PC-3 (cell line): ENCODE measurements at regions of chr12 and their contacts with region 1.

Region 1: GRCh38 chr12:43407816-43408645 is 144.0 kb downstream of the ADAMTS20 start:
- DNase-seq: peak; percentile 70
- ATAC-seq: peak; percentile 81
- H3K4me3 ChIP-seq: no peak overlapping the region
- H3K27ac ChIP-seq: peak overlapping the region; percentile 82
- H3K4me1 ChIP-seq: peaks cover 34% of the 10 kb centered on the region
- H3K27me3 ChIP-seq: no peaks in the 10 kb centered on the region
- CTCF ChIP-seq: no peak

Region 2: GRCh38 chr12:43370260-43370659 is 37.8 kb before region 1 on chr12:
- CTCF ChIA-PET with region 1: no interaction called
- POLR2A ChIA-PET with region 1: no interaction called
- intact Hi-C with region 1: loop called (anchors 1 kb)
- DNase-seq: peak; percentile 94
- ATAC-seq: peak; percentile 99
- H3K4me3 ChIP-seq: no peak overlapping the region
- H3K27ac ChIP-seq: peak overlapping the region; percentile 54
- H3K4me1 ChIP-seq: peaks cover 16% of the 10 kb centered on the region
- H3K27me3 ChIP-seq: no peaks in the 10 kb centered on the region
- CTCF ChIP-seq: no peak

Region 3: DNA sequence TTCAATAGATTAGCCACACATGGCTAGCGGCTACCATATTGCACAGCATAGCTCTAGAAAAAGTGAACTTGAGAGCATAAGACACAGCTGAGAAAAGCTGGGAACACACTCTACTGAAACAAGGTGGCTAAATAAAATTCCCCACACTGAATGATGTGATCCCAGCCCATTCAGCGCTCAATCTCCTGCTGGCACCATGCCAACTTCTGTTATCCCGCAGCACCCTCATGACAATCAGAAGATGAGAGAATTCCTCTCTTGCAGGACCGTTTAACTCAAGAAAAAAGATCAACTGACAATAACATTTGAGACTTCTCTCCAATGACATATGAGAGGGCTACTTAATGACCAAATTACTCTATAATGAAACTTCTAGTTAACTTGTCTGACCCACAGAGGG is 28.6 kb after region 1 on chr12:
- CTCF ChIA-PET with region 1: no interaction called
- POLR2A ChIA-PET with region 1: no interaction called
- intact Hi-C with region 1: no loop called
- DNase-seq: no peak
- ATAC-seq: no peak
- H3K4me3 ChIP-seq: no peak overlapping the region
- H3K27ac ChIP-seq: no peak overlapping the region
- H3K4me1 ChIP-seq: no peaks in the 10 kb centered on the region
- H3K27me3 ChIP-seq: no peaks in the 10 kb centered on the region
- CTCF ChIP-seq: no peak

Region 4: DNA sequence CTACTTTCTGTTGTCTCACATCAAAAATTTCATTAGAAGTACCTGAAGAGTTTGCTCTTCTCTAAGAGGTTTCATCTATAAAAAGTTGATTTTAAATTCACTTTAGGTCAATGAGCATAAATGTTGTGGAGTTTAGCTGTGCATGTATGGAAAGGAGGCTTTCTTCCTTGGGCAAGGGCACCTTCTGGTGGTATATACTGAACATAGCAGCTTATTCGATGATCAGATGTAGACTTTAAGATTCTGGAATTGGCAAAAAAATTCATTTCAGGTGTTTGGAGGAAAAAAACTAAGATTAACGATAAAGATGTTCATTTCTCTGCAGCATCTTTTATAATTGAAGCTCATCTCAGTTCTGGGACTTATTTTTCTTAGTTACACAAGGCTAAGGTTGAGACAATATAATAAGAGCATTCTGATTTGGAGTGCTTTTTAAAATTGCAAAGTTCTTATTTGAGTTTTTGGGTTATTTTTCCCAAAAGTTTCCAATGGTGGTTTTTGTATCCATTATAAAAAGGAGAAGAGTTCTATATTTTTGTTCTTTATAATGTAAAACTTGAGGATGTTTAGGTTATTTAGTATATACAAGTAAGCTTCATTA is 474.6 kb after region 1 on chr12:
- CTCF ChIA-PET with region 1: no interaction called
- POLR2A ChIA-PET with region 1: no interaction called
- intact Hi-C with region 1: no loop called
- DNase-seq: peak; percentile 75
- ATAC-seq: peak; percentile 82
- H3K4me3 ChIP-seq: no peak overlapping the region
- H3K27ac ChIP-seq: no peak overlapping the region
- H3K4me1 ChIP-seq: no peaks in the 10 kb centered on the region
- H3K27me3 ChIP-seq: no peaks in the 10 kb centered on the region
- CTCF ChIP-seq: peak; percentile 91